Activated CD4-positive, alpha-beta memory T cell treated with anti-CD3 and anti-CD28 coated beads for 36 hours (primary cell): ENCODE measurements at regions of chr5 and their contacts with region 1.

Region 1: DNA sequence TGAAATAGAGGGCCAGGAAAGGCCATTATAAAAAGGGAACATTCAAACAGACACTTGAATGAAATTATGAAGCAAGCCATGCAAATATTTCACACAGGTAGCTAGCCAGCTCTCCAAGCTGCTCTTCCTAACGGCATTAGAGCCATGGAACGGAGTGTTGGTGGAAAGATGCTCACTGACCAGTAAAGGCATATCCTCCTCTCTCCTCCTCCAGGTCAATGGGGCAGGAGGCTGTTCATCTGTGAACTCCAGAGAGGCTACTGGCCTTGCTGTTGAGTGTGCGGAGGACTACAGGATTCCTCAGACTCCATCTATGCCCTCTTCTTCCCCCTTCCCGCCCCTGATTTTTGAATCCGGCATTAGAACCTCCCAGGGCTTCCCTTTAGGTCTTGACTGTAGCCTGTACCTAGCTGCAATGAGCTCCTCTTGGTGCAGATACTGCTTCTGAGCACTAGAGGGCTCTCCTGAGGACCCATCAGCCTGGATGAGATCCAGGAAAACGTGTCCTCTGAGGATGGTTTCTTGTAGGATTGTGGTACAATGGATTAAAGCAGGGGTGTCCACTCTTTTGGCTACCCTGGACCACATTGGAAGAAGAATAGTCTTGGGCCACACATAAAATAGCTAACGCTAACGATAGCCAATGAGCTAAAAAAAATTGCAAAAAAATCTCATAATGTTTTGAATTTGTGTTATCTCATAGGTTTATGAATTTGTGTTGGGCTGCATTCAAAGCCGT is 162.2 kb downstream of the SREK1 start:
- DNase-seq: peak; percentile 45
- H3K4me3 Mint-ChIP-seq: no peak overlapping the region
- H3K27ac Mint-ChIP-seq: no peak overlapping the region
- H3K4me1 Mint-ChIP-seq: peaks cover 3% of the 10 kb centered on the region
- H3K27me3 Mint-ChIP-seq: peaks cover 10% of the 10 kb centered on the region

Region 2: GRCh38 chr5:65742565-65743231 is 563.6 kb before region 1 on chr5:
- CTCF ChIA-PET with region 1: interaction called, 4 read pairs
- POLR2A ChIA-PET with region 1: no interaction called
- intact Hi-C with region 1: loop called (anchors 1 kb)
- DNase-seq: peak; percentile 42
- H3K4me3 Mint-ChIP-seq: no peak overlapping the region
- H3K27ac Mint-ChIP-seq: no peak overlapping the region
- H3K4me1 Mint-ChIP-seq: peaks cover 12% of the 10 kb centered on the region
- H3K27me3 Mint-ChIP-seq: no peaks in the 10 kb centered on the region

Region 3: GRCh38 chr5:65903581-65903980 is 402.7 kb before region 1 on chr5:
- CTCF ChIA-PET with region 1: no interaction called
- POLR2A ChIA-PET with region 1: no interaction called
- intact Hi-C with region 1: no loop called
- DNase-seq: no peak
- H3K4me3 Mint-ChIP-seq: no peak overlapping the region
- H3K27ac Mint-ChIP-seq: no peak overlapping the region
- H3K4me1 Mint-ChIP-seq: no peaks in the 10 kb centered on the region
- H3K27me3 Mint-ChIP-seq: no peaks in the 10 kb centered on the region

Region 4: DNA sequence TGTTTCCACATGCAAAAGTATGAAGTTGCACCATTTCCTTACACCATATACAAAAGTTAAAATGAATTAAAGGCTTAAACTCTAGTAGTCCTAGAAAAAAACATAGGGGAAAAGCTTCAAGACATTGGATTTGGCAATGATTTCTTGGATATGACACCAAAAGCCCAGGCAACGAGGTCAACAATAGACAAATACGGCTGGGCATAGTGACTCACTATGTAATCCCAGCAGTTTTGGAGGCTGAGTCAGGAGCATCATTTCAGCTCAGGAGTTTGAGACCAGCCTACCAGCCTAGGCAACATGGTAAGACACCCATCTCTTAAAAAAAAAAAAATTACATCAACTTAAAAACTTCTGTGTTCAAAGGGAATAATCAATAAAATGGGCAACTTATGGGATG is 193.1 kb before region 1 on chr5:
- CTCF ChIA-PET with region 1: no interaction called
- POLR2A ChIA-PET with region 1: no interaction called
- intact Hi-C with region 1: no loop called
- DNase-seq: no peak
- H3K4me3 Mint-ChIP-seq: no peak overlapping the region
- H3K27ac Mint-ChIP-seq: no peak overlapping the region
- H3K4me1 Mint-ChIP-seq: no peaks in the 10 kb centered on the region
- H3K27me3 Mint-ChIP-seq: no peaks in the 10 kb centered on the region

Region 5: DNA sequence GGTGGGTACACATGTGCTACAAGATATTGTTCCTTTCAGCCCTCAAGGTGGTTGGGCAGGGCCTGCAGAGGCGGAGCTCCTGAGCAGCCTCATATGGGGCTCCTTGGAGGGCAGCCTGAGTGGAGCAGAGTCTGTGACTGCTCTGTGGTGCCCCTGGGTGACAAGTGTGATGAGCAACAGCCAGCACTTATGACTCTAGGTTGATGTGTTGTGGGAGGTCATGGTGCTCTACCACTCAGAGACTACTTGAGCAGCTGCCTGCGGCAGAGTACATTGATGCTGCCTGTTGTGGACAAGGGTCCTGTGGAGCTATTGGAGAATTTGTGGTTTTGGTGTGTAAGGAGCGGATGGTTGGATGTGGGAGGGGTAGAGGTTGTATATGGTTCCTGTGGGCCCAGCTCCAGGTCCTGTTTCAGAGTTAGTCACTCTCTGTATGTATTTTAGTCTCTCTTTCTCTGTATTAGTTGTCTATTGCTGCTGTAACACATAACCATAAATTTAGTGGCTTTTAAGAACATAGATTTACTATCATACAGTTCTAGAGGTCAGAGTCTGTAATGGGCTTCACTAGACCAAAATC is 20.8 kb before region 1 on chr5:
- CTCF ChIA-PET with region 1: interaction called, 12 read pairs
- POLR2A ChIA-PET with region 1: no interaction called
- intact Hi-C with region 1: no loop called
- DNase-seq: no peak
- H3K4me3 Mint-ChIP-seq: no peak overlapping the region
- H3K27ac Mint-ChIP-seq: no peak overlapping the region
- H3K4me1 Mint-ChIP-seq: no peaks in the 10 kb centered on the region
- H3K27me3 Mint-ChIP-seq: peaks cover 4% of the 10 kb centered on the region

Region 6: DNA sequence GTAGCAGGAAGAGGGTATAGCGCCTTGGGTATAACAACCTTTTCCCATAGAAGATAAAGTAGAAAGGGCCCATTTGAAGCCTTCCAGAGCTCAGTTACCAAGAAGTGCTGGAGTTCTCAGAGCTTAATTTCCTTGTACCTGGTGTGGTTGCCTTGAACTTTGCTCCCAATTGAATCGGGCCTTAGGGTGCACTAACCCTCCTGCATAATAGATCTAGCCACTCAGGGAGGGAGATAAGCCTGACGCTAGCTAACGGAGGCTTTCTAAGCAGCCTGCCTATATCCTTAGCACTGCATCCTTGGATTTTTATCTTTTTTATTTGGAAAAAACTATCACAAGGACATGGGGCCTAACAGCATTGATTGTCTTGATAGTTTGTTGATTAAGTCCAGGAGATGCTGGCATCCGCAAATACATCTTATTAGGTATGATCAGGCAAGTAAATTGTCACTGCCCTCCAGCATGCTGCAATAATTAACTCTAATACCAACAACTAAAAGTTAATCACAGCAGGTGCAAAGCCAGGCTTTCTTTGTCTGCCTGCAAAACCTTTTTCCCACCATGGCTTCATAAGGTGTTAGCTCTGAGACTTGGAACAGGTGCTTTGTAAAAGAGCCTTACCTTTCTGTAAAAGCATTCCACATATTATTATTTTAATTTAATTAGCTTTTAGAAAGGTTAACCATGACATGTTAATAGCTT is 37.2 kb after region 1 on chr5:
- CTCF ChIA-PET with region 1: interaction called, 11 read pairs
- POLR2A ChIA-PET with region 1: no interaction called
- intact Hi-C with region 1: no loop called
- DNase-seq: no peak
- H3K4me3 Mint-ChIP-seq: no peak overlapping the region
- H3K27ac Mint-ChIP-seq: no peak overlapping the region
- H3K4me1 Mint-ChIP-seq: no peaks in the 10 kb centered on the region
- H3K27me3 Mint-ChIP-seq: peaks cover 5% of the 10 kb centered on the region

Region 7: DNA sequence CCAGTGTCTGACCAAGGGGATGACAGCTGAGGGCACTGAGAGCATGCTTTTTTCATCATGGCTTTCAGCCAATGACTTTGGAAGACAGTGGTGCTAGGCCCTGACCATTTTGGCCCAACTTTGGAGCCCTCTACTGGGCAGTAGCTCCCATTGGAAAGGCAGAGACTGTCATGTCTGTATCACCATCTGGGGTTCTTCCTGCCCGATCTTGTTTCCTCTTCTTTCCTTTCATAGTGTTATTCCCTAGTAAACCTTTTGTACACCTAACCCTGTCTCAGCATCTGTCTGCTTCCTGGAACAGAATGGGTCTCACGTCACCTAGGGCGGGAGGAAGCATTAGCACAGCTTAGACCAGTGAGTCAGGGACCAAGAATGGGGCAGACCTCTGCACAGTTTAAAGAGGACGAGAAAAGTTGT is 192.5 kb after region 1 on chr5:
- CTCF ChIA-PET with region 1: interaction called, 21 read pairs
- POLR2A ChIA-PET with region 1: no interaction called
- intact Hi-C with region 1: loop called (anchors 1 kb)
- DNase-seq: peak; percentile 13
- H3K4me3 Mint-ChIP-seq: no peak overlapping the region
- H3K27ac Mint-ChIP-seq: no peak overlapping the region
- H3K4me1 Mint-ChIP-seq: no peaks in the 10 kb centered on the region
- H3K27me3 Mint-ChIP-seq: no peaks in the 10 kb centered on the region

Region 8: DNA sequence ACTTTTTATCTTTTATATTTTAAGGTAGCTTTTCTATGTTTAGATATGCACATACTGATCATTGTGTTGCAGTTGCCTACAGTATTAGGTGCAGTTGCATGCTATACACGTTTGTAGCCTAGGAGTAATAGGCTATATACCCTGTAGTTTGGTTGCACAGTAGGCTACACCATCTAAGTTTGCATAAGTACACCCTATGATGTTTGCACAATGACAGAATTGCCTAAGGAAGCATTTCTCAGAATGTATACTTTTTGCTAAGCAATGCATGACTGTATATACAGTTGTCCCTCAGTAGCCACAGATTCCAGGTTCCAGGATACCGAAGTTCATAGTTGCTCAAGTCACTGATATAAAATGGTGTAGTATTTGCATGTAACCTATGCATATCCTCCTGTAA is 458.7 kb after region 1 on chr5:
- CTCF ChIA-PET with region 1: interaction called, 100 read pairs
- POLR2A ChIA-PET with region 1: no interaction called
- intact Hi-C with region 1: loop called (anchors 5 kb)
- DNase-seq: no peak
- H3K4me3 Mint-ChIP-seq: no peak overlapping the region
- H3K27ac Mint-ChIP-seq: no peak overlapping the region
- H3K4me1 Mint-ChIP-seq: no peaks in the 10 kb centered on the region
- H3K27me3 Mint-ChIP-seq: peaks cover 4% of the 10 kb centered on the region

Region 9: DNA sequence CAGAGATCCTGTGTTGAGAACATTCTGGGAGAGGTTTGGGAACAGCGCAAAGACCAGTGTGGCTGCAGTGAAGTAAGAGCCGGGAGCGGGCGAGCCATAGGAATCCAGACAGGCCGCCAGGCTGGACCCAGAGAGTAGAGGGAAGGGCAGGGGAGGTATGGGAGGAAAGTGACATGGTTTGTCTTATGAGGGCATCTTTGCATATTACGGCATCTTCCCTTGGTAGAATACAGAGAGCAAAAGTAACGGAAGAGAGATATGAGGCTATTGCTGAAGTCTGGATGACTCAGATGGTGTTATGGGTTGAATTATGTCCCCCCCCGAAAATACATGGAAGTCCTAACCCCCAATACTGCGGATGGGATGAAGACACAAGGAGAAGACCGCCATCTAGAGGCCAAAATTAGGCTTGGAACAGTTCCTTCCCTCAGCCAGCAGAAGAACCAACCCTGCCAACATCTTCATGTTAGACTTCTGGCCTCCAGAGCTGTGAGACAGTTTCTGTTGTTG is 558.1 kb after region 1 on chr5:
- CTCF ChIA-PET with region 1: interaction called, 13 read pairs
- POLR2A ChIA-PET with region 1: no interaction called
- intact Hi-C with region 1: no loop called
- DNase-seq: peak; percentile 37
- H3K4me3 Mint-ChIP-seq: no peak overlapping the region
- H3K27ac Mint-ChIP-seq: no peak overlapping the region
- H3K4me1 Mint-ChIP-seq: peaks cover 8% of the 10 kb centered on the region
- H3K27me3 Mint-ChIP-seq: peaks cover 10% of the 10 kb centered on the region